ENCODE measurements at regions of chr20 and their contacts with region 1.

Region 1: DNA sequence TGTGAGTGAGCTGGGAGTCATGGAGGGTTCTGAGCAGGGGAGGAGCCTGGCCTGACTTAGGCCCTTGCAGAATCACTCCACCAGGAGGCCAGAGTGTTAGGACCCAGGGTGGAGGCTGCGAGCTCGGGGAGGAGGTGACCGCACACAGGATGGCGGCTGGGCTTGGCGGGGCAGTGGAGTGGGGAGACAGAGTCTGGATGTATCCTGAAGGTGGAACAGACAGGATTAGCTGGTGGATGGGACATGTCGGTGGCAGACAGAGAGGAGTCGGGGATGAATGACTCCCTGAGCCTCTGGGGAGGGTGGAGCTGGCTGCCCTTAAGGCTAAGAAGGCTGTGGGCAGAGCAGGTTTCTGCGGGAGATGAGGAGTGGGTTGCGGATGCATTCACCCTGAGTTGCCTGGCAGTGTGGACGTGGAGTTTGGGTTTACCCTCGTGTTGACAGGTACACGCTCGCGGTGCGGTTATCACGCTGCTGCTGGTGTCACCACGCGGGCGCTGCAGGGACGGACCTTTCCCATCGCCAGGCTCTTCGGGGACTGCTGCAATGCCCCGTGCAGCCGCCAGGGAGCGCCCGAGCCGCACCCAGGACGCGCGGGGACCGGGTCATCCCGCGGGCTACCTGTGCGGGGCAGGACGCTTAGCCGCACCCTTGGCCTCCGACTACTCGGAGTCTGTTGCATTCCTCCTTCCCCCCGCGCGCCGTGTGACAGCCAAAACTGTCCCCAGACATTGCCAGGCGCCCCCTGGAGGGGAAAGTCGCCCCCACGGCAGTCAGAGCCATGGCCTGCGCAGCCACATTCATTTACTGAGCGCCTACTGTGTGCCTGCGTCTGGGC is 43.0 kb upstream of the PTGIS start:
- DNase-seq: peak; percentile 80 to 94
- H3K4me3 ChIP-seq: no peak overlapping the region
- H3K27ac ChIP-seq: peak overlapping the region; percentile 18; the same call in 1 of the 2 replicates
- H3K4me1 ChIP-seq: peaks cover 74% of the 10 kb centered on the region
- H3K27me3 ChIP-seq: no peaks in the 10 kb centered on the region
- CTCF ChIP-seq: peak; percentile 99

Region 2: GRCh38 chr20:49583669-49584417 is 27.1 kb before region 1 on chr20:
- CTCF ChIA-PET with region 1: no interaction called
- POLR2A ChIA-PET with region 1: interaction called, 14 read pairs
- intact Hi-C with region 1: no loop called
- DNase-seq: peak; percentile 88 to 99
- H3K4me3 ChIP-seq: peak overlapping the region; percentile 15; the same call in 1 of the 2 replicates
- H3K27ac ChIP-seq: peak overlapping the region; percentile 94
- H3K4me1 ChIP-seq: peaks cover 98% of the 10 kb centered on the region
- H3K27me3 ChIP-seq: no peaks in the 10 kb centered on the region
- CTCF ChIP-seq: no peak; the same call in 1 of the 2 replicates

Region 3: GRCh38 chr20:49685809-49686208 is 74.9 kb after region 1 on chr20:
- CTCF ChIA-PET with region 1: no interaction called
- POLR2A ChIA-PET with region 1: no interaction called
- intact Hi-C with region 1: no loop called
- DNase-seq: no peak
- H3K4me3 ChIP-seq: no peak overlapping the region
- H3K27ac ChIP-seq: peak overlapping the region; percentile 91
- H3K4me1 ChIP-seq: peaks cover 98% of the 10 kb centered on the region
- H3K27me3 ChIP-seq: no peaks in the 10 kb centered on the region
- CTCF ChIP-seq: no peak

Region 4: DNA sequence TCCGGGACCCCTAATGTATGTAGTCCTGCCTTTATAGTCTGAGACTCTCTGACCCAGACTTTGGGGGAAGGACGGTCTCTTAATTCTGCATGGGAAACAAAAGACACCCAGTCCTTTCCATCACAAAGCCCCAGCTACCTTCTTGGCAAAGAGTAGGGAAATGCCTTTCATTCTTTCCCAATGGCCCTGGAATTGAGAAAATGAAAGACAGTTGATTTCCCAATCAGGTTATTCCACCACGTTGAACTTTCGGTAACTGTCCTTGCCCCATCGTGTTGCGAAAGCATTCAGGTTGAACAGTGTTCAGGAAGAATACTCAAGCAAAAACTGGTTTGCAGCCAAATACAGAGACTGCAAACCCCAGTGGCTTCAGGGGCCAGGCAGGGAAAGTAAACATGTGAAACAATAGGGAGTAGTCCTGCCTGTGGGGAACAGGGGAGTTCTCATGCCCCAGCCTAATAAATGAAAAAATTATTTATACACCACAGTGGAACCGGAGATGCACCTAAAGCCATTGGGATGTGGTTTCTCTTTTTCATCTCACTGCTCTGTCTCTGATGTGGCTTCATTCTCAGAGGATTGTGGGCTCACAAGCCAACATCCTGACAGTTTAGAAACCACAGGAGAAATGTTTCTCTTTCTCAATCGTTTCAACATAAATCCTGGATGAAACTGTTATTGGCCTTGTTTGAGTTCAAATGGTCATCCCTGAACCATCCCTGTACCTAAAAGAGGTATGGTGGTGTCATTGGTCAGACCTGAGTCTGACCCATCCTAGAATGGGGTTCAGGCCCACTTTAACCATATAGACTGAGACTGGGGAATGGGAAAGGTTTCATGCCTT is 157.5 kb after region 1 on chr20:
- CTCF ChIA-PET with region 1: no interaction called
- POLR2A ChIA-PET with region 1: interaction called, 4 read pairs
- intact Hi-C with region 1: loop called (anchors 1 kb)
- DNase-seq: peak; percentile 91 to 100
- H3K4me3 ChIP-seq: no peak overlapping the region
- H3K27ac ChIP-seq: peak overlapping the region; percentile 96
- H3K4me1 ChIP-seq: peaks cover 93% of the 10 kb centered on the region
- H3K27me3 ChIP-seq: no peaks in the 10 kb centered on the region
- CTCF ChIP-seq: no peak

Region 5: DNA sequence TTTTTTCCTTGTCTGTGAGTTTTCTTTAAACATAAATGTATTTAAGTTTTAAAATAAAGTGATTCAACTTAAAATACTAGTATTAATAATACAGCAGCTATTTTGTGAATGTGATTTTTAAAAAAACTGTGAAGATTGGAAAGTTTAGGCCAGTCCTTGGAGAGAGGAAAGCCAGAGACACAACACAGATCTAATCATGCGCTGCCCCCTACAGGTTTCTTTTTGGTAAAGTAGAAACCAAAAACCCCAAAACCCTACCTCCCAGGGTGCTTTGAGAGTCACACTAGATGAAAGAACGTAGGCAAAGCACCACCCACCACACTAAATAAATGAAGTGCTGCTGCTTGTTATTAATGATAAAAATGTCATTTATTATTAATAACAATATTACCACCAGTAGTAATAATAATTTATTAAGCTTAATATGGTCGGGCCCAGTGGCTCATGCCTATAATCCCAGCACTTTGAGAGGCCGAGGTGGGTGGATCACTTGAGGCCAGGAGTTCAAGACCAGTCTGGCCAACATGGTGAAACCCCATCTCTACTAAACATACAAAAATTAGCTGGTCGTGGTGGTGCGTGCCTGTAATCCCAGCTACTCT is 235.4 kb after region 1 on chr20:
- CTCF ChIA-PET with region 1: interaction called, 17 read pairs
- POLR2A ChIA-PET with region 1: no interaction called
- intact Hi-C with region 1: loop called (anchors 1 kb)
- DNase-seq: peak; percentile 35 to 62
- H3K4me3 ChIP-seq: no peak overlapping the region
- H3K27ac ChIP-seq: peak overlapping the region; percentile 33
- H3K4me1 ChIP-seq: peaks cover 8% of the 10 kb centered on the region; the same call in 1 of the 2 replicates
- H3K27me3 ChIP-seq: no peaks in the 10 kb centered on the region
- CTCF ChIP-seq: peak; percentile 90

Region 6: GRCh38 chr20:50070991-50071888 is 460.3 kb after region 1 on chr20:
- CTCF ChIA-PET with region 1: no interaction called
- POLR2A ChIA-PET with region 1: no interaction called
- intact Hi-C with region 1: loop called (anchors 5 kb)
- DNase-seq: peak; percentile 69 to 96
- H3K4me3 ChIP-seq: peak overlapping the region; percentile 66
- H3K27ac ChIP-seq: no peak overlapping the region
- H3K4me1 ChIP-seq: 0 out of 2 replicates have a peak, but pooled peaks cover 5% of the 10 kb centered on the region
- H3K27me3 ChIP-seq: no peaks in the 10 kb centered on the region
- CTCF ChIP-seq: peak; percentile 100

Region 7: GRCh38 chr20:50108556-50109235 is 497.8 kb after region 1 on chr20:
- CTCF ChIA-PET with region 1: no interaction called
- POLR2A ChIA-PET with region 1: no interaction called
- intact Hi-C with region 1: no loop called
- DNase-seq: no peak
- H3K4me3 ChIP-seq: no peak overlapping the region
- H3K27ac ChIP-seq: no peak overlapping the region
- H3K4me1 ChIP-seq: peaks cover 32% of the 10 kb centered on the region
- H3K27me3 ChIP-seq: no peaks in the 10 kb centered on the region
- CTCF ChIP-seq: no peak

Measured in PC-9 (cell line).